ENCODE measurements at regions of chr3 and their contacts with region 1.

Region 1: GRCh38 chr3:12841149-12841970 is at the start of gene RPL32:
- DNase-seq: peak; percentile 90
- H3K4me3 Mint-ChIP-seq: peak within 1 kb of the TSS; percentile 96
- H3K27ac Mint-ChIP-seq: peak within 1 kb of the TSS; percentile 99
- H3K4me1 Mint-ChIP-seq: peaks cover 48% of the 10 kb centered on the region
- H3K27me3 Mint-ChIP-seq: no peaks in the 10 kb centered on the region
- total RNA-seq, gene RPL32: 3,385 to 3,704 TPM

Region 2: GRCh38 chr3:12556671-12557472 is 284.5 kb before region 1 on chr3 and contains the start of gene MKRN2:
- CTCF ChIA-PET with region 1: interaction called, 3 read pairs
- intact Hi-C with region 1: loop called (anchors 1 kb)
- DNase-seq: peak; percentile 83
- H3K4me3 Mint-ChIP-seq: peak within 1 kb of the TSS; percentile 78
- H3K27ac Mint-ChIP-seq: peak within 1 kb of the TSS; percentile 88
- H3K4me1 Mint-ChIP-seq: peaks cover 48% of the 10 kb centered on the region
- H3K27me3 Mint-ChIP-seq: peaks cover 24% of the 10 kb centered on the region
- total RNA-seq, gene MKRN2: 32.9 to 34.5 TPM

Region 3: GRCh38 chr3:12706504-12707253 is 134.7 kb before region 1 on chr3:
- CTCF ChIA-PET with region 1: no interaction called
- intact Hi-C with region 1: loop called (anchors 1 kb)
- DNase-seq: peak; percentile 80
- H3K4me3 Mint-ChIP-seq: no peak overlapping the region
- H3K27ac Mint-ChIP-seq: no peak overlapping the region
- H3K4me1 Mint-ChIP-seq: no peaks in the 10 kb centered on the region
- H3K27me3 Mint-ChIP-seq: no peaks in the 10 kb centered on the region

Region 4: GRCh38 chr3:12810013-12810780 is 31.2 kb before region 1 on chr3:
- CTCF ChIA-PET with region 1: interaction called, 19 read pairs
- intact Hi-C with region 1: loop called (anchors 1 kb)
- DNase-seq: peak; percentile 94
- H3K4me3 Mint-ChIP-seq: peak overlapping the region; percentile 47
- H3K27ac Mint-ChIP-seq: no peak overlapping the region
- H3K4me1 Mint-ChIP-seq: peaks cover 4% of the 10 kb centered on the region
- H3K27me3 Mint-ChIP-seq: no peaks in the 10 kb centered on the region

Region 5: DNA sequence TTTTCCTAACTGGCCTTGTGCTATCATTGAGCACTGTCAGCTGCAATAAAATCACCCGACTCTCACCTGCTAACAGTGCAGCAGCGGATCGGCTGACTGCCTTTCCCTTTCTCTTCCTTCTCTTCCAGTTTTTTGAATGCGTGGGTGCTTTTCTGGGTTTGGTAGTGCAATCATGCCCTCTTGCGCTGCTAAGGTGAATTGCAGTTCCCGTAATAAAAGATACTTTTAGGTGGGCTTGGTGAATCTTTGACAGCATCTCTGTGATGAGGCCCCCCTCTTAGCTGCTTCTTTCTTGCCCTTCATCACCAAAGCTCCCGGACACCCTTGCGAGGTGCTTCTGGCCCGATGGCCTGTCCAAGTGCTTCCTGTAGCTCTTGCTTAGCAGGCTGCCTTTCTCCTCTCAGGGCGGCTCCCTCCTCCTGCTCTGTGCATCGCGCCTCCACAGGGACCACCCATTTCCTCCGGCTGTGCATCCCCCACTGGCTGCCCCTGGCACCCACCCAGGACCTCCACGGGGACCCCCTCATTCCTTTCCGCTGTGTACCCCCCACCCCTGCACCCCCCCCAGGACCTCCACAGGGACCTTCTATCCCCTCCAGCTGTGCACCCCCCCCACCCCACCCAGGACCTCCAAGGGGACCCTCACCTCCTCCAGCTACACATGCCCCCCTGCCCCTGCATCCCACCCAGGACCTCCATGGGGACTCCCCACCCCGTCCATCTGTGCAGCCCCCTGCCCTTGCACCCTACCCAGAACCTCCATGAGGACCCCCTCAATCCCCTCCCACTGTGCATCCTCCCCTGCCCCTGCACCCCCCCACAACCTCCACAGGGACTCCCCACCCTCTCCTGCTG is 50.9 kb after region 1 on chr3:
- CTCF ChIA-PET with region 1: interaction called, 15 read pairs
- intact Hi-C with region 1: no loop called
- DNase-seq: peak; percentile 63
- H3K4me3 Mint-ChIP-seq: no peak overlapping the region
- H3K27ac Mint-ChIP-seq: no peak overlapping the region
- H3K4me1 Mint-ChIP-seq: peaks cover 5% of the 10 kb centered on the region
- H3K27me3 Mint-ChIP-seq: no peaks in the 10 kb centered on the region

Region 6: GRCh38 chr3:12994607-12995388 is 153.4 kb after region 1 on chr3:
- CTCF ChIA-PET with region 1: interaction called, 10 read pairs
- intact Hi-C with region 1: no loop called
- DNase-seq: peak; percentile 90
- H3K4me3 Mint-ChIP-seq: peak overlapping the region; percentile 86
- H3K27ac Mint-ChIP-seq: peak overlapping the region; percentile 87
- H3K4me1 Mint-ChIP-seq: peaks cover 71% of the 10 kb centered on the region
- H3K27me3 Mint-ChIP-seq: no peaks in the 10 kb centered on the region

Region 7: DNA sequence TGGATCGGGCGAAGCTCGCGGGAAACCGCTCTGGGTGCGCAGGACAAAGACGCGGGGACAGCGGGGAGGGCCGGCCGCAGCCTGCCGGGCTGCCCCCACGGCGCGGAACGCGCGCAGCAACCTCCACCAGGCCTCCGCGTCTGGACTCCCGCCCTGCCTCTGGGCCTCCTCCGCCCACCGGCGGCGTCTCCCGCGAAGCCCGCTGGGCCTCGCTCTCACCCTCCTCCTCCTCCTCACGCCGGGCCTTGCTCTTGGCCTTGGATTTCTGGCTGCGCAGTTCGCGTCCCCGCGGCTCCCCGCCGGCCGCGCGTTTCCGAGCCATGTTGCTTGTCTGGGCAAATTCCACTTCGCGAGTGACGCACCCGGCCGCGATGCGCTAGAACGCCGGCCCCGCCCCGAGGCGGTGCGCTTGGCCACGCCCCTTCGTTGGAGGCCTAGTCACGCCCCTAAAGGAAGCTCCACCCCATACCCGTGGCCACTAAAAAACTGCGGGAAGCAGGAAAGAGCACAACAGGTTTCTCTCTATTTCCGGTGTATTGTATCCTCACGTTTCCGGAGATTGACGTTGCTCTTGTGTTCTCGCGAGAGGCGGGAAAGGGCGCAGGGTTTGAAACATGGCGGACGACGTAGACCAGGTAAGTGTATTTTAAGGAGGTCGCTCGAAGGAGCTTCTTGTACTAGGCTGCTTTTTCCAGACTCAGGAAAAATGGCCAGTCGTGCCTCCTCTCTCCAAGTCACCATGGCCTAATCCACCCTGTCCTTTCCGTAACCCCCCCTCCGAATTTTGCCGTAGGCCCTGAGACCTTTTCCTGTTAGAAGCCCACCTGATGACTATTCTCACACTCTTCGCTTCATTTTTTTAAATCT is 1337.1 kb after region 1 on chr3 and contains the starts of genes LSM3 and XPC:
- CTCF ChIA-PET with region 1: no interaction called
- intact Hi-C with region 1: loop called (anchors 5 kb)
- DNase-seq: peak; percentile 97
- H3K4me3 Mint-ChIP-seq: peak within 1 kb of the TSS; percentile 96
- H3K27ac Mint-ChIP-seq: peak within 1 kb of the TSS; percentile 98
- H3K4me1 Mint-ChIP-seq: peaks cover 63% of the 10 kb centered on the region
- H3K27me3 Mint-ChIP-seq: no peaks in the 10 kb centered on the region
- total RNA-seq, gene LSM3: 26.1 to 26.2 TPM
- total RNA-seq, gene XPC: 39.0 to 39.8 TPM

Measured in activated naive CD4-positive, alpha-beta T cell treated with anti-CD3 and anti-CD28 coated beads for 36 hours (primary cell).